IMR-90 (cell line): ENCODE measurements at regions of chr11 and their contacts with region 1.

Region 1: GRCh38 chr11:35313066-35313759 is 106.1 kb downstream of the SLC1A2 start:
- DNase-seq: no peak
- ATAC-seq: no peak
- H3K4me3 ChIP-seq: no peak overlapping the region
- H3K27ac ChIP-seq: no peak overlapping the region
- H3K4me1 ChIP-seq: no peaks in the 10 kb centered on the region
- H3K27me3 ChIP-seq: no peaks in the 10 kb centered on the region
- CTCF ChIP-seq: no peak
- POLR2A ChIP-seq: no peak
- RAD21 ChIP-seq: no peak

Region 2: DNA sequence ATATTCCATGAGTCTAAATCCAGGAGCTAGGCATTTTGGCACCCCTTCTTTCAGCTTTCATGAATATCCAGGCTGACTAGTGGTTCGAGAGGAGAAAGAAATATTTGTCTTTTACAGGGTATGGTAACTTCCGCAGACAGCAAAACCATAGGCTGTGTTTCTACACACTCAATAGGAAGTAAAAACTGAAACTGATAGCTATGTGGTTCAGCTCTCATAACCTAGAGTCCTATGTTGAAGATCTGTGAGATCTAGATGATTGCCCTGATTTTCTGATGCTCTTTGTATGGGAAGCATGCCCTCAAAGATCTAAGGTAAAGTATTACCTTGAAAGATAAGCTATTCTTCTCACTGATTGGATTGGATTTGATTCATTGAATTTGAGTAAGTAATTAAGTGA is 55.9 kb before region 1 on chr11:
- CTCF ChIA-PET with region 1: no interaction called
- POLR2A ChIA-PET with region 1: no interaction called
- dilution Hi-C with region 1: no loop called
- in situ Hi-C with region 1: loop called (anchors 10 kb)
- intact Hi-C with region 1: no loop called
- DNase-seq: no peak
- ATAC-seq: no peak
- H3K4me3 ChIP-seq: no peak overlapping the region
- H3K27ac ChIP-seq: no peak overlapping the region
- H3K4me1 ChIP-seq: peaks cover 14% of the 10 kb centered on the region
- H3K27me3 ChIP-seq: no peaks in the 10 kb centered on the region
- CTCF ChIP-seq: no peak
- POLR2A ChIP-seq: no peak
- RAD21 ChIP-seq: no peak